Lower leg skin (tissue), 4 donors: ENCODE measurements at regions of chr6 and their contacts with region 1.

Region 1: DNA sequence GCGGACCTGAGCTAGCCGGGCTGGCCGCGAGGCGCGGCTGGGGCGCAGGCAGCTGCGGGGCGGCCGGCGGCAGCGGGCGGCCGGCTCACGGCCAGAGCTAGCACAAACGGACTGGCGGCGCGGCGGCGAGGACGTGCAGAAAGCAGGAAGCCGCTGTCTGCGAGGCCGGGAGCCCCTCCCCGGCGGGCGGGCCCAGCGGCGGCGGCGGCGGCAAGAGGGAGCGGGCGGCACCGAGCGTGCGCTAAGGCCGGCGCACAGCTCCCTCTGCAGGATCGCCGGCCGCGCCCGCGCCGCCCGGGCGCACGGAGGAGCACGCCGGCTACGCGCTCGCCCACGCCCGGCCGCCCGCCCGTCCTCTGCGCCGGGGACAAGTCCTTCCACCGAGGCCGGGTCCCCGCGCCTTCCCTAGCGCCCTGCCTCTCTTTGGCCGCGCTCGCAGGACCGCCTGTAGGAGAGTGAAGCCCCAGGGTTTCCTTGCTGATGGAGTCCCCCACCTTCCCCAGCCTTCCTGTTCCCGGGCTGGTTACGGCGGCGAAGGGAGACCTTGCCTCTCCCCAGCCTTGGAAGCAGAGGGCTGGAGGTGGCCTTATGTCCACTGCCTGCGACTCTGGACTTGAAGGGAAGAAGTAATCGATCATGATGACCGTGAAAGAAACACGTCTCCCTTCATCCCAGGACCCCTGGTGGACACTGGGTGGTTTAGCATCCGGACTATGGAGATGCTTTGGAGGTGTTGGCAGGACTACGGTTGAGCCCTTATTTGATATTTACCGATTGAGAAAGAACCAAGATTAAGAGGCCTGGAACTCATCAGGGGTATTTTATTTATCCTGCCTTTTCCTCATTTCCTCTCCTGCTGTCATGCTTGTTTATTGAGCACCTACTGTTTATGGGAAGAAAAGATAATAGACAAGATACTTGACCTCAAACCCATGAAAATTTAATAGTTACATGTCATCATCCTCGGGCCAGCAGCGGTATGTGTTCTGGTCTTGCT is at the start of gene PREP:
- DNase-seq: peak; percentile 73 to 95
- H3K4me3 ChIP-seq: peak within 1 kb of the TSS; percentile 100
- CTCF ChIP-seq: peak in 1 of 3 donors; percentile 52
- POLR2A ChIP-seq: no peak
- total RNA-seq, gene PREP: 33.9 to 39.1 (median 35.1) TPM

Region 2: DNA sequence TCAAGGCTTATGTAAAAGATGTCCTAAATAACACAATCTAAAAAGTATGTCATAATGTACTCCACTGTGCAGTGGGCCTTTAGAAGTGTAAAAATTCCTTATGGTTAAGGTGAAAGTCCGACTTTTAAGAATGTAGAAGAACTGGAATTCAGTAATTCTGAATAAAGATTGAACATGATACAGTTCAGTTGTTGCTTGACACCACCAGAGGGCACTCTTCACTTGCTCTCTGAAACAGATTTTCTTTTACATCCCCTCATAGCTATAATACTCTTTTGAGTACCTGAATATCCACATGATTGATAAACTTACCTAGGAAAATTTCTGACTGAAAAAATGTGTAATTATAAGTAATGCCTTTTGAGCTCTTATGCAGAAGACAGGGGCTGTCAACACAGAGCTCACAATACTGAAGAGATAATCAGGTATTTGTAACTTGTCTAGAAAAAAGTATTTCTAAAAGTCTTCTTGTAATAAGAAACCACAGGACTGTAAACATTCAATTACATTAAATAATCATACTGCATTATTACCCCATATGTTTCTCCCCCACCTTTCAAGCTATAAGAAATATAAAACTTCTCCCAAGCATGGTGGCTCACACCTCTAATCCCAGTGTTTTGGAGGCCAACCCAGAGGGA is 315.5 kb before region 1 on chr6:
- intact Hi-C with region 1: loop called (anchors 5 kb)
- DNase-seq: no peak
- H3K4me3 ChIP-seq: no peak overlapping the region
- CTCF ChIP-seq: peak in 2 of 3 donors; percentile 29 to 50
- POLR2A ChIP-seq: no peak

Region 3: GRCh38 chr6:105326833-105327770 is 76.1 kb before region 1 on chr6:
- intact Hi-C with region 1: no loop called
- DNase-seq: no peak
- H3K4me3 ChIP-seq: no peak overlapping the region
- CTCF ChIP-seq: no peak
- POLR2A ChIP-seq: no peak

Region 4: GRCh38 chr6:106339334-106340029 is 936.2 kb after region 1 on chr6:
- intact Hi-C with region 1: no loop called
- DNase-seq: peak in 1 of 2 donors; percentile 43
- H3K4me3 ChIP-seq: no peak overlapping the region
- CTCF ChIP-seq: no peak
- POLR2A ChIP-seq: no peak